Activated naive CD8-positive, alpha-beta T cell treated with anti-CD3 and anti-CD28 coated beads, Interleukin-2, amount 10 ng/mL, durations not matched to agents 7 days and 5 days (primary cell): ENCODE measurements at regions of chr15 and their contacts with region 1.

Region 1: GRCh38 chr15:75842722-75843551 is at the start of gene UBE2Q2:
- DNase-seq: peak; percentile 79
- ATAC-seq: peak; percentile 63
- H3K4me3 Mint-ChIP-seq: peak within 1 kb of the TSS; percentile 94
- H3K27ac Mint-ChIP-seq: peak within 1 kb of the TSS; percentile 90
- H3K4me1 Mint-ChIP-seq: peaks cover 33% of the 10 kb centered on the region
- H3K27me3 Mint-ChIP-seq: peaks cover 19% of the 10 kb centered on the region
- total RNA-seq, gene UBE2Q2: 27.5 to 29.7 TPM

Region 2: GRCh38 chr15:75831571-75831979 is 11.4 kb before region 1 on chr15:
- POLR2A ChIA-PET with region 1: interaction called, 13 read pairs
- DNase-seq: no peak
- ATAC-seq: no peak
- H3K4me3 Mint-ChIP-seq: no peak overlapping the region
- H3K27ac Mint-ChIP-seq: no peak overlapping the region
- H3K4me1 Mint-ChIP-seq: peaks cover 20% of the 10 kb centered on the region
- H3K27me3 Mint-ChIP-seq: peaks cover 2% of the 10 kb centered on the region

Region 3: DNA sequence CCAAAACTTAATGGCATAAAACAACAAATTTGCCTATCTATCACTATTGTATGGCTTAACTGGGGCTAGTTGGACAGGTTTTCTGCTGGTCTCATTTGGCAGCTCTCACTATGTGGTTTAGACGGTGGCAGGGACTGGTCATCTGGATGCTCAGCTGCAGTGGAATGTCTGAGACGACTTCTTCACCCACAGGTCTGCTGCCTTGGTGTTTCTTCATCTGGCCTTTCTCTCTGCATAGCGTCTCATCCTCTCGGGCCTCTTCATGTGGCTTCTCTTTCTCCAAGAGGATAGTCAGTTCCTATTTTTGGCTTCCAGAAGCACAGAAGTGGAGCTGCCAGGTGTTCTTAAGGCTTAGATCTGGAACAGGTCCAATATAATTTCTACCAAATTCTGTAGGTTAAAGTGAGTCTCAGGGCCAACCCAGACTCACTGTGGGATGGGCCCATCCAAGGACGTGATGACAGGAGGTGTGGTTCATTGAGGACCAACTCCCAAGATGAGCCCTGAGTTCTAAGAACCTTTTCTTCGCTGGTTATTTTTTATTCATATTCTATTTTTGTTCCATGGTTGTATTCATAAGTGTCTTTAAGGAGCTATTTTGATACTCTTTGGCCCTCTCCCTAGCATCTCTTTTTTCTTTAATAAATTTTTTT is 18.9 kb after region 1 on chr15:
- POLR2A ChIA-PET with region 1: no interaction called
- DNase-seq: no peak
- ATAC-seq: no peak
- H3K4me3 Mint-ChIP-seq: no peak overlapping the region
- H3K27ac Mint-ChIP-seq: no peak overlapping the region
- H3K4me1 Mint-ChIP-seq: peaks cover 11% of the 10 kb centered on the region
- H3K27me3 Mint-ChIP-seq: no peaks in the 10 kb centered on the region

Region 4: GRCh38 chr15:75903331-75904239 is 60.6 kb after region 1 on chr15 and contains the start of gene FBXO22:
- POLR2A ChIA-PET with region 1: interaction called, 10 read pairs
- DNase-seq: peak; percentile 94
- ATAC-seq: peak; percentile 95
- H3K4me3 Mint-ChIP-seq: peak within 1 kb of the TSS; percentile 93
- H3K27ac Mint-ChIP-seq: peak within 1 kb of the TSS; percentile 99
- H3K4me1 Mint-ChIP-seq: peaks cover 31% of the 10 kb centered on the region
- H3K27me3 Mint-ChIP-seq: no peaks in the 10 kb centered on the region
- total RNA-seq, gene FBXO22: 32.2 to 33.9 TPM